ENCODE measurements at regions of chr9 and their contacts with region 1.

Region 1: GRCh38 chr9:87662808-87663528 is 63.0 kb upstream of the CTSL start:
- DNase-seq: peak; percentile 86
- ATAC-seq: peak; percentile 86

Region 2: DNA sequence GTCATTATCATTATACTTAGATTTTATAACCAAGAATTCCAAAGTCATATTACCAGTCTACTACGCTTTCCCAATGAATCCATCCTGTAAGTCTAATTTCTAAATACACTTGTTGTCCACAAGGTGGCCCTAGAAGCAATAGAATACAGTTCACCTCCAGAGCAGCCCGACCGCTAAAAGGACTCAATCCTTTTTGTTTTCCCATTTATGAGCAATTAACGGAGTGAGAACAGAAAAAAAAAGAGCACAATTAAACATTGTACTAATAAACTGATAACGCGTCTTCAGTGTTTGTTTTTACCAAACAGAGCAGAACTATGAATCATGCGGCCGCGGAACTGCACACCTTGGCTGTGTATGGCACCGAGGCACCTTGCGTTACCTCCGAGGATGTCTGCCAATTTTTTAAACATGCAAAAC is 326.0 kb before region 1 on chr9:
- intact Hi-C with region 1: loop called (anchors 2 kb)
- DNase-seq: no peak
- ATAC-seq: peak; percentile 86